GM12878 (cell line): ENCODE measurements at regions of chr5 and their contacts with region 1.

Region 1: GRCh38 chr5:148120317-148120716 is 48.0 kb upstream of the SPINK14 start:
- DNase-seq: no peak
- ATAC-seq: no peak
- H3K4me3 ChIP-seq: no peak overlapping the region
- H3K27ac ChIP-seq: no peak overlapping the region
- H3K4me1 ChIP-seq: no peaks in the 10 kb centered on the region
- H3K27me3 ChIP-seq: no peaks in the 10 kb centered on the region
- CTCF ChIP-seq: no peak
- EP300 ChIP-seq: no peak
- POLR2A ChIP-seq: no peak
- RAD21 ChIP-seq: no peak

Region 2: GRCh38 chr5:147949711-147950573 is 170.4 kb before region 1 on chr5:
- CTCF ChIA-PET with region 1: interaction called, 5 read pairs
- POLR2A ChIA-PET with region 1: no interaction called
- RAD21 ChIA-PET with region 1: no interaction called
- SMC1A ChIA-PET with region 1: no interaction called
- in situ Hi-C with region 1: no loop called
- intact Hi-C with region 1: loop called (anchors 2 kb)
- DNase-seq: no peak
- ATAC-seq: peak; percentile 77
- H3K4me3 ChIP-seq: no peak overlapping the region
- H3K27ac ChIP-seq: no peak overlapping the region
- H3K4me1 ChIP-seq: no peaks in the 10 kb centered on the region
- H3K27me3 ChIP-seq: no peaks in the 10 kb centered on the region
- CTCF ChIP-seq: peak; percentile 48 to 66 (median 48); a peak in 4 of 6 replicates
- EP300 ChIP-seq: no peak
- POLR2A ChIP-seq: no peak
- RAD21 ChIP-seq: peak; percentile 68